Naive thymus-derived CD4-positive, alpha-beta T cell (primary cell): ENCODE measurements at regions of chr18 and their contacts with region 1.

Region 1: GRCh38 chr18:4605212-4605611 is 150.1 kb upstream of the DLGAP1 start:
- DNase-seq: no peak
- ATAC-seq: no peak
- H3K4me3 ChIP-seq: no peak overlapping the region
- H3K4me3 Mint-ChIP-seq: no peak overlapping the region
- H3K27ac ChIP-seq: no peak overlapping the region
- H3K27ac Mint-ChIP-seq: no peak overlapping the region
- H3K4me1 ChIP-seq: no peaks in the 10 kb centered on the region
- H3K4me1 Mint-ChIP-seq: no peaks in the 10 kb centered on the region
- H3K27me3 ChIP-seq: no peaks in the 10 kb centered on the region
- H3K27me3 Mint-ChIP-seq: no peaks in the 10 kb centered on the region

Region 2: GRCh38 chr18:4578449-4578848 is 26.8 kb before region 1 on chr18:
- CTCF ChIA-PET with region 1: no interaction called
- POLR2A ChIA-PET with region 1: no interaction called
- intact Hi-C with region 1: no loop called
- DNase-seq: no peak
- ATAC-seq: no peak
- H3K4me3 ChIP-seq: no peak overlapping the region
- H3K4me3 Mint-ChIP-seq: no peak overlapping the region
- H3K27ac ChIP-seq: no peak overlapping the region
- H3K27ac Mint-ChIP-seq: no peak overlapping the region
- H3K4me1 ChIP-seq: no peaks in the 10 kb centered on the region
- H3K4me1 Mint-ChIP-seq: no peaks in the 10 kb centered on the region
- H3K27me3 ChIP-seq: no peaks in the 10 kb centered on the region
- H3K27me3 Mint-ChIP-seq: no peaks in the 10 kb centered on the region

Region 3: GRCh38 chr18:4658804-4659203 is 53.6 kb after region 1 on chr18:
- CTCF ChIA-PET with region 1: no interaction called
- POLR2A ChIA-PET with region 1: no interaction called
- intact Hi-C with region 1: loop called in 1 of 2 experiments (anchors 10 kb)
- DNase-seq: no peak
- ATAC-seq: no peak
- H3K4me3 ChIP-seq: no peak overlapping the region
- H3K4me3 Mint-ChIP-seq: no peak overlapping the region
- H3K27ac ChIP-seq: no peak overlapping the region
- H3K27ac Mint-ChIP-seq: no peak overlapping the region
- H3K4me1 ChIP-seq: no peaks in the 10 kb centered on the region
- H3K4me1 Mint-ChIP-seq: no peaks in the 10 kb centered on the region
- H3K27me3 ChIP-seq: no peaks in the 10 kb centered on the region
- H3K27me3 Mint-ChIP-seq: no peaks in the 10 kb centered on the region